Activated B cell treated with CpG ODN at 0.5 μM for 24 hours (primary cell): ENCODE measurements at regions of chr1 and their contacts with region 1.

Region 1: DNA sequence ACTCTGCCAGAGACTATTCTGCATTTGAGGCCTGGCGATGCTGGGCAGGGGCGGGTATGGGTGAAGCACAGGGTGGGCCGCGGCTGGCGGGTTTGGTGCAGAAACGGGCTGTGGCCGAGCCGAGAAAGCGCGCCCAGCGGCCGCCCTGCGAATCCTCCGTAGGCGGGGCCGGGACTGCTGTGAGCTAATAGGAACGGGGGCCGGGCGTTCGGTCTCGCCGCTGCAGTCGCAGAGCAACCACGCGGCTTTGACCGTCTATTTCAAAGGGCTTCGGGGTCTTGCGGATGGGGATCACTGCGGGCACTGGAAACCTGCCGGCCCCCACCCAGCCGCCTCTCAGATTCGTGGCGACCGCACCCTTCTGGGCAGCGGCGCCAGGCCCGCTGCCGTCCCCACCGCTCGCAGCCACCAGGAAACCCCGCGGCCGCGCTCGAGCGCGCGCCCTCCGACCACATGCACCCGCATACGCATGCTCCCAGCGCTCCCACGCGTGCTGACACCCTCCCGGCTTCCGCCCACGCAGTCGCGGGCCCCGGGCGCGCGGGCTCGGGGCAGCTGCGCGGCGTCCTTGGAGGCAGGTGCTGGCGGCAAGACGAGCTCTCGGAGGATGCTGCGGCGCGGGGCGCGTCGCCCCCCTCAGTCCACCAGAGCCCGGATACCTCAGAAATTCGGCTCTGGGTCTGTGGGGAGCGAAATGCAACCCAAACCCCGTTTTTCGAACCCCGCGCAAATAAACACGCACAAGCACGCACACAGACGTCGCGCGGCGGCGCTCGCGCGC is 32.6 kb downstream of the DNTTIP2 start:
- DNase-seq: peak; percentile 85
- ATAC-seq: peak; percentile 56
- H3K4me3 Mint-ChIP-seq: peak overlapping the region; percentile 93
- H3K27ac Mint-ChIP-seq: peak overlapping the region; percentile 96
- H3K4me1 Mint-ChIP-seq: peaks cover 24% of the 10 kb centered on the region
- H3K27me3 Mint-ChIP-seq: peaks cover 2% of the 10 kb centered on the region
- CTCF ChIP-seq: no peak

Region 2: DNA sequence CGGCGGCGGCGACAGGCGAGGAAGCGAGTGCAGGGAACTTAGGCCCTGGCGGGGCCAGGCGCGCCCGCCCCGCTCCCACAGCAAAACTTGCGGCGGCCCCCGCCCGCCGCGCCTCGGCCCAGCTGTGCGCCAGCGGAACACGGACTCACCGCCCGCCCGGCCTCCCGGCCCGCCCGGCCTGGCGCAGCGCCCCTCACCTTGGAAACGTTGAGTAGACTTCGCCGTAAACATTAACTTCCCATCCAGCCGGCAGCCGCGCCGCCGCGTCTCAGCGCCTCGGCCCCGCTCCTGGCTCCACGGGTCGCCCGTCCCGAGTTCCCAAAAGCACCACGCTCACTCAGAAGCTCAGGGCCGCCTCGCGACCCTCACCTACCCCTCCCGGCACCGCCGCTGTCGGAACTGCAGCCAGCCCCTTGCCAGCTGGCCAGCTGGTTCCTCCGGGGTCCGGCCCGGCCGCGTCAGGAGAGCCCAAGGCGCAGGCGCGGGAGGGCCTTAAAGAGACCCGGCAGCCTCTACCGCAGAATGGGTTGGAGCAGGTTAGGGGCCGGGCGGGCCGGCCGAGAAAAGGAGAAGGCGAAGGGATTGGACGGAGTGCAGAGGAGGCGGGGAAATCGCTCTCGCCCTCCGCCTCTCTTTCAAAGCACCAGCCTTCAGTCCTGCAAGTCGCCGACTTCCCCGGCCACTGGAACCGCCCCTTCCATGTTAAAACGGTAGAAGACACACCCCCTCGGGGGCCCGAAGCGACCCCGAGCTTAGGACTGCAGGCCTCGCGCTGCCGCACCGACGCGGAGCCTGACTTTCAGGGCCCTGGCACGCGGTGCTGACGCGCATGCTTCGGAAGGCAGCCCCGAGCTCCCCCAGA is 1061.5 kb before region 1 on chr1 and contains the start of gene EVI5:
- CTCF ChIA-PET with region 1: no interaction called
- POLR2A ChIA-PET with region 1: no interaction called
- intact Hi-C with region 1: loop called (anchors 1 kb)
- DNase-seq: peak; percentile 86
- ATAC-seq: peak; percentile 92
- H3K4me3 Mint-ChIP-seq: peak within 1 kb of the TSS; percentile 92
- H3K27ac Mint-ChIP-seq: peak within 1 kb of the TSS; percentile 91
- H3K4me1 Mint-ChIP-seq: peaks cover 31% of the 10 kb centered on the region
- H3K27me3 Mint-ChIP-seq: no peaks in the 10 kb centered on the region
- CTCF ChIP-seq: no peak
- total RNA-seq, gene EVI5: 18.2 and 27.4 TPM in 2 replicates

Region 3: GRCh38 chr1:93078986-93079654 is 767.3 kb before region 1 on chr1 and contains the start of gene MTF2:
- CTCF ChIA-PET with region 1: interaction called, 3 read pairs
- POLR2A ChIA-PET with region 1: interaction called, 7 read pairs
- intact Hi-C with region 1: loop called (anchors 1 kb)
- DNase-seq: peak; percentile 89
- ATAC-seq: peak; percentile 90
- H3K4me3 Mint-ChIP-seq: peak within 1 kb of the TSS; percentile 96
- H3K27ac Mint-ChIP-seq: peak within 1 kb of the TSS; percentile 97
- H3K4me1 Mint-ChIP-seq: peaks cover 54% of the 10 kb centered on the region
- H3K27me3 Mint-ChIP-seq: no peaks in the 10 kb centered on the region
- CTCF ChIP-seq: no peak
- total RNA-seq, gene MTF2: 49.1 and 59.7 TPM in 2 replicates

Region 4: DNA sequence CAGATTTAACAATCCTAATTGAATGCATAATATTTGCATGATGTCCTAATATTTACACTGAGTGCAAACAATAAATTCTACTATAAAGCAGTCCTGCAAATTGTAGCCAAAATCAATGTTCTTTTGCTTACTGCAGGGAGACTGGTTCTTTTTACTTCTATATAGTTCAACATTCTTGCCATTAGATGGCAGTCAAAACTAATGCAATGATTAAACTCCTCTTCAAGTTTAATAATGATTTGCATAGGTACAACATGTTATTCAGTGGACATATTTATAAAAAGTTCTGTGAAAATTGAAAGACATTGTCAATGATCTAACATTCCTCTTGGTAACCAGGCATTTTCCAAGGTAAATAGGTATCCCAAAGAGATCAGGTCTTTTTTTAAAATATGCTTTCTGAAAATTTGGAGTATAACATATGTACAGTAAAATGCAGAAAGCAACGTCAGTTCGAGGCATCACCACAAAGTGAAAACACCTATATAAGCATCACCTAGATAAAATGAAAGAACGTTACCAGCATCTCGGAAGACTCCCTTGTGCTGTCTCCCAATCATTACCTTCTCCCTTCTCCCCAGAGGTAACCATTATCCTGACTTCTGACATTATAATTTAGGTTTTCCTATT is 408.3 kb before region 1 on chr1:
- CTCF ChIA-PET with region 1: interaction called, 11 read pairs
- POLR2A ChIA-PET with region 1: no interaction called
- intact Hi-C with region 1: loop called (anchors 1 kb)
- DNase-seq: no peak
- ATAC-seq: peak; percentile 76
- H3K4me3 Mint-ChIP-seq: no peak overlapping the region
- H3K27ac Mint-ChIP-seq: no peak overlapping the region
- H3K4me1 Mint-ChIP-seq: peaks cover 3% of the 10 kb centered on the region
- H3K27me3 Mint-ChIP-seq: peaks cover 3% of the 10 kb centered on the region
- CTCF ChIP-seq: no peak

Region 5: GRCh38 chr1:93701619-93702018 is 144.8 kb before region 1 on chr1:
- CTCF ChIA-PET with region 1: no interaction called
- POLR2A ChIA-PET with region 1: interaction called, 12 read pairs
- intact Hi-C with region 1: no loop called
- DNase-seq: no peak
- ATAC-seq: peak; percentile 47
- H3K4me3 Mint-ChIP-seq: no peak overlapping the region
- H3K27ac Mint-ChIP-seq: peak overlapping the region; percentile 46
- H3K4me1 Mint-ChIP-seq: peaks cover 69% of the 10 kb centered on the region
- H3K27me3 Mint-ChIP-seq: no peaks in the 10 kb centered on the region
- CTCF ChIP-seq: no peak

Region 6: DNA sequence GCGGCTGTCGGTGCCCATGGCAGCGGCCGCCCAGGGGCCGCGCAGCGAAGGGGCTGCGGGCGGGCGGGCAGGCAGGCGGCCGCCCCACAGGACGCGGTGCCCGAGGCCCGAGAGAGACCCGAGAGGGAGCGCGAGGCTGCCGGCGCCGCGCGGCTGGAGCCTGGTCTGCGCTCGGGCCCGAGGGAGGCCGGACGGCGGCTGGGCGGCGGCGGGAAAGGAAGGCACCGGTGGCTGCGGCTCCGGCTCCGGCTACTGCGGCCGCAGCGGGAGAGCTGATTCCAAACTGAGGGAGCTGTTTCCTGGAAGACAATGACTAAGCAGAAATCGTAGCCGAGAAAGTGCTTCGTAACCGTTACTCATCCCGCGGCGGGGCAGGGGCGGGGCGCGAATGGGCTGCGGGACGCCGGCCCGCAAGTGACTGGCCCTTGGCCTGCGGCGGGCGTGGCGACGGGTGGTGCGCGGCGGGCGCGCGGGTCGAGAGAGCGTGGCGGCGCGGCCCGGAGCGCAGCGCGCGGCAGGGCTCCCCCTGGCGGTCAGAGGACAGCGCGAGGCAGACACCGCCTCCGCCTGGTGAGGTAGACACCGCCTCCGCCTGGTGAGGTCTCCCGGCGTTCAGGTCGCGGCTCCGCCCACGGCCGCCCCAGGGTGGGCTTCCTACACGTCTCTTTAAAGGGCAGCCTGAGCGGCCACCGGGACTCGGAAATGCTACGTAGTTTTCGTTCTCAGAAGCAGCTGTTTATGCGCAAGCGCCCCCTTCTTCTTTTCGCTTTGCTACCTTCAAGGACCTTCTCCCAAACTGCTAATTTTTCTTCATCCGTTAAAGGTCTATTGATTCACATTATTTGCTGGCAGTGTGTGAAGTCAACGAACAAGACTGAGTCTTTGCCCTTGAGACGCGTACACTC is 63.0 kb after region 1 on chr1 and contains the start of gene GCLM:
- CTCF ChIA-PET with region 1: interaction called, 3 read pairs
- POLR2A ChIA-PET with region 1: interaction called, 3 read pairs
- intact Hi-C with region 1: loop called (anchors 1 kb)
- DNase-seq: peak; percentile 95
- ATAC-seq: peak; percentile 92
- H3K4me3 Mint-ChIP-seq: peak within 1 kb of the TSS; percentile 89
- H3K27ac Mint-ChIP-seq: peak within 1 kb of the TSS; percentile 87
- H3K4me1 Mint-ChIP-seq: peaks cover 25% of the 10 kb centered on the region
- H3K27me3 Mint-ChIP-seq: no peaks in the 10 kb centered on the region
- CTCF ChIP-seq: peak; percentile 48
- total RNA-seq, gene GCLM: 8.6 and 9.6 TPM in 2 replicates

Region 7: GRCh38 chr1:94092210-94092613 is 245.8 kb after region 1 on chr1:
- CTCF ChIA-PET with region 1: no interaction called
- POLR2A ChIA-PET with region 1: no interaction called
- intact Hi-C with region 1: no loop called
- DNase-seq: no peak
- ATAC-seq: no peak
- H3K4me3 Mint-ChIP-seq: no peak overlapping the region
- H3K27ac Mint-ChIP-seq: no peak overlapping the region
- H3K4me1 Mint-ChIP-seq: no peaks in the 10 kb centered on the region
- H3K27me3 Mint-ChIP-seq: peaks cover 25% of the 10 kb centered on the region
- CTCF ChIP-seq: no peak